Aorta (tissue), 5 donors: ENCODE measurements at regions of chr15 and their contacts with region 1.

Region 1: DNA sequence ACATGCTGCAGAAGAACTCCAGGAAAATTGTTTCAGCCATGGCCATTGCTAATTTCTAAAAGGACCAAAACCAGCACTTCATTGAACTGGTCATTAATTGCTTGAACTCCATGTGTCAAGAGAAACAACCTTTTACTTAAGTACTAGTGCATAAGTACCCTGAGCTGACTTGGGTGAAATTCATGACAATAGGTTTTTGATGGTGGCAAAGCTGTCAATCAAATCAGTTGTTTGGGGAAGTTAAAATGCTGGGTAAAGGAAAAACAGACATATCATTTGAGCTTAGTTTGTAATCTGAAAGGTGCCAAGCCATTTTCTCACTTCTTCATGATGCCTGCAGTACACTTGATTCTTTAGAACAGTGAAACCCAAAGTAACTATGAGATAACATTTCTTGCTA is 408.0 kb upstream of the ARRDC4 start:
- DNase-seq: no peak
- ATAC-seq: no peak
- H3K4me3 ChIP-seq: no peak overlapping the region
- H3K27ac ChIP-seq: no peak overlapping the region
- H3K4me1 ChIP-seq: no peaks in the 10 kb centered on the region
- H3K27me3 ChIP-seq: no peaks in the 10 kb centered on the region

Region 2: GRCh38 chr15:97425596-97425995 is 127.0 kb before region 1 on chr15:
- intact Hi-C with region 1: no loop called
- DNase-seq: no peak
- ATAC-seq: no peak
- H3K4me3 ChIP-seq: no peak overlapping the region
- H3K27ac ChIP-seq: no peak overlapping the region
- H3K4me1 ChIP-seq: no peaks in the 10 kb centered on the region
- H3K27me3 ChIP-seq: no peaks in the 10 kb centered on the region

Region 3: DNA sequence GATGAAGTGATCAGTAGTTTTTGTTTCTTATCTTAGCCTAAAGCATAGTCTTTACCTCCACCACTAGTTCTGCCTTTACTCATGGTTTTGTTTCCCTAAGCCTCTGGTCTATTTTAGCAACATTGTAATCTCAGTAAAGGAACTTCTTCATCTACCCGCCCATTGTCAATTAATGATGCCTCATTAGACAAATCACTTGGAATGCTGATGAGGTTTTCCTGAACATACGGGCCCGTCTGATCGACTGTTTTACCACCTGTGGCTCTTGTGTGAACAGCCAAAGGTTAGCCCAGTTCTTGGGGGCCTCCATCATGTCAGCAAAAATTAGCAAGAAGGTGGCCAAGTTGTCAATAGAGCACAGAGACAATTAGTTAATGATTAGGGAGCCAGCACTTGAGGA is 62.1 kb before region 1 on chr15:
- intact Hi-C with region 1: loop called in 1 of 2 experiments (anchors 10 kb)
- DNase-seq: no peak
- ATAC-seq: no peak
- H3K4me3 ChIP-seq: no peak overlapping the region
- H3K27ac ChIP-seq: no peak overlapping the region
- H3K4me1 ChIP-seq: no peaks in the 10 kb centered on the region
- H3K27me3 ChIP-seq: no peaks in the 10 kb centered on the region